AG04450 (cell line): ENCODE measurements at regions of chr16 and their contacts with region 1.

Region 1: GRCh38 chr16:86479419-86479818 is 30.9 kb upstream of the FOXF1 start:
- DNase-seq: no peak
- H3K4me3 ChIP-seq: no peak overlapping the region
- H3K27ac ChIP-seq: no peak overlapping the region
- H3K27me3 ChIP-seq: no peaks in the 10 kb centered on the region
- CTCF ChIP-seq: no peak

Region 2: DNA sequence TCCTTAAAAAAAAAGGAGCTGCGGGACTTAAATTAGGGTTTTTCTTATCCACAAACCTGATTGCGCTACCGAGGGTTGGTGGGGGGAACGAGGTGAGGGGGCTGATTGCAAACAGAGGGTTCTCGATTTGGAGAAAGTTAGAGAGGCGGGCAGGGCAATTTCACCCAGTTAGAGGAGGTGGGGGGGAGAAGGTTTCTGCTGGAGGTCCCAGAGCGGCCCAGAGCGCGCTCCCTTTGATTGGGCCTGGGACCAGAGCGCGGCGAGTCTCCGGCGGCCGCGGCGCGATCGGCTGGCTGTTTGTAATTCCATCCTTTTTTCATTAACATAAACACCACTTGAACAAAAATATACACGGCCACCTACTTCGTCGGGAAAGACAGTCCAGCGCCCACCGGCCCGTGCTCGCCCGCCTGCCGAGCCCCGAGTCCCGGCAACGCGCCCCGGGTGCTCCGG is 17.5 kb after region 1 on chr16:
- CTCF ChIA-PET with region 1: interaction called, 3 read pairs
- POLR2A ChIA-PET with region 1: interaction called, 17 read pairs
- DNase-seq: no peak
- H3K4me3 ChIP-seq: peak overlapping the region; percentile 47
- H3K27ac ChIP-seq: peak overlapping the region; percentile 21
- H3K27me3 ChIP-seq: no peaks in the 10 kb centered on the region
- CTCF ChIP-seq: no peak